ENCODE measurements at regions of chr2 and their contacts with region 1.

Region 1: GRCh38 chr2:106572541-106573450 is 85.6 kb downstream of the CD8B2 start:
- DNase-seq: peak; percentile 15
- ATAC-seq: peak; percentile 73
- H3K4me3 ChIP-seq: no peak overlapping the region
- H3K27ac ChIP-seq: no peak overlapping the region
- H3K4me1 ChIP-seq: peaks cover 7 to 9% of the 10 kb centered on the region in 2 experiments; a peak in 2 of 4 replicates
- H3K27me3 ChIP-seq: no peaks in the 10 kb centered on the region
- CTCF ChIP-seq: peak; percentile 38 to 80 (median 76); a peak in 5 of 6 replicates
- POLR2A ChIP-seq: no peak
- RAD21 ChIP-seq: peak; percentile 43

Region 2: DNA sequence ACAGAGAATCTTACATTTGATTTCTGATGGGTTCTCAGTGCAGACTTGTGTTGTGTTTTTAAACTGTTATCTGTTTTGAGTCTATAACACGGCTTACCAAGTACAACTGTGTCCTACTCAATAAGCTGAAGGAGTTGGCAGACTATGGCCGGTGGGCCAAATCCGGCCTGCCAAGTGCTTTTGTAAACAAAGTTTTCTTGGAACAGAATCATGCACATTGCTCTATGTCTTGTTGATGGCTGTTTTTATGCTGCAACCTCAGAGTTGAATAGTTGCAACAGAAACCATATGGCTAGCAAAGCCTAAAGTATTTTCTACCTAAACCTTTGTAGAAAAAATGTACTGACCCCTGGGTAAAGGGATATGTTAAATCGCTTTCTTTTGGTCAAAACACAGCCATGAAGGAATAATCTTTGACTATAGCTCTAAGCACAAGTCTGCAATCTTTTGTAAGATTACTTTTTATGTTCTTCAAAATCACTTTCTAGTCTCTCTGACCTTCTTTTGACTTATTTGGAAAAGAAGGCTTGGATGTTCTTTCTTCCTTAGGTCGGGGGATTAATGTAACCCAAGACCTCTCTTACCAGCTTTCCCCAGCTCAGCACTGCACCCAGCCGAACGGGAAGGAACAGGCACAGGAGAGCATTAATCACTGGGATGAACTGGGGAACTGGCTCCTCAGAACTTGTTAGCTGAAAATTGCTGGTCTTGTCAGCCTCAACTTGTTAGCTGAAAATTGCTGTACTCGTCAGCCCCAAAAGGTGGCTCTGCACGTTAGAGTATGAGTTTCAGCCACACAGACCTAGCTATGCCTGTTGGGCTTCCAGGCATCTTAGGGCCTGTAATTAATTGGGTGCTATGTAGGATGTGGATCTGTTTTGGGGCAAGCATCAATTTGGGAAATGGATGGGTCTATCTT is 10.3 kb before region 1 on chr2:
- CTCF ChIA-PET with region 1: interaction called, 24 read pairs
- POLR2A ChIA-PET with region 1: no interaction called
- RAD21 ChIA-PET with region 1: no interaction called
- intact Hi-C with region 1: no loop called
- DNase-seq: no peak
- ATAC-seq: peak; percentile 69
- H3K4me3 ChIP-seq: no peak overlapping the region
- H3K27ac ChIP-seq: no peak overlapping the region
- H3K4me1 ChIP-seq: no peaks in the 10 kb centered on the region
- H3K27me3 ChIP-seq: peaks cover 9% of the 10 kb centered on the region; the same call in 1 of the 2 replicates
- CTCF ChIP-seq: no peak
- POLR2A ChIP-seq: no peak
- RAD21 ChIP-seq: no peak

Measured in HCT116 (cell line).